Right ventricle myocardium inferior (tissue), 1 donor: ENCODE measurements at regions of chr2 and their contacts with region 1.

Region 1: GRCh38 chr2:224938651-224939182 is 103.6 kb downstream of the DOCK10 start:
- DNase-seq: no peak
- ATAC-seq: peak; percentile 26

Region 2: DNA sequence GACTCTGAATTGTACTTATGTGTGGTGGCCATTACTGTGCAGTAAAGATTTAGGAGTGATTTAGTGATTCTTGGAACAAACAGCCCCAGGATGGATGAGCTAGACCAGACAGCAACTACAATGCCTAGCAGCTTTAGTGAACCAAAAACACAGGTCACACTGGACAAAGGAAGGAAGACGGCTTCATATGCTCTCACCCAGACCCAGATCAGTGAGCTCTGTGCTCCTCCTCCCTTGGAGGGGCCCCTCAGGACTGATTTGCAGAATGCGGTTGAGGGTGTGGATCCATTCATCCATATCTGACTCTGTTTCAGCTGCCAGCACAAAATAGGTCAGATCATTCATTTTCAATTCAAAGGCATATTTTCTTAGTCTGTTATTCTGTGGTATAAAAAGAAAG is 62.9 kb before region 1 on chr2:
- intact Hi-C with region 1: no loop called
- DNase-seq: no peak
- ATAC-seq: no peak

Region 3: DNA sequence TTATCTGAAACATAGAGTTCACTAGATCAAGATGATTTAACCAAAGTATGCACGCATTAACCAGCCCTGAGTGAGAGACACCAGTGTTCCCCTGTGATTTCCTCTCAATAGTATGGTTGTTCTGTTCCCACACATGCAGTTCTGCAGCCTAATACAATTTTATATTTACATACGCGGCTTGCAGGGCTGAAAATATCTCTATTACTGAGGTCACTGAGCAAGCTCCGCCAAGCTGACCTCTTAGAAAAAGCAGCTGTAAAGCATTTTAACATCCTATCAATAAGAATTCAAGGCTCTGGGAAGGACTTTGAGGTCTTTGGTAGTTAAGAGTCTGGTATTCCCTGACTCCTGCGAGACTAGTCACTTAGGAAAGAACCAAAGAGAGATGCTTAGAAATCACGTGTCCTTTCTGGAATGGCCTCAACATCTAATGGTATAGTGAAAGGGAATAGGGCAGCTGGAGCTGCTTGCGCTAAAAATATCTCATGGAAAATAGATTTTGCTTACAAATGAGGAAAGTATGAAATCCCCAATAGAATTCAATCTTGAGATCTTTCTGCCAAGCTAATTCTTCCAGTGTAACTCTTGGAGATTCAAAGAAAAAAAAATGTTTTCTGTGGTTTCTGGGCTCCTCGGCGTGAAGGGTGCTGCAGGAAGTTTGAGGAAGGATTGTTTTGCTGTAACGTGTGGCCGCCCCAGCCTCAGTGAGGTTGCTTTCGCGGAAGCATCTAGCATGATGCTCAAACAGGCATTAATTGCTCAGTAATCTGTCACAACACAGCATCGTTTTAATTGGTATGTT is 44.4 kb after region 1 on chr2:
- intact Hi-C with region 1: loop called (anchors 5 kb)
- DNase-seq: no peak
- ATAC-seq: no peak